ENCODE measurements at regions of chr12 and their contacts with region 1.

Region 1: DNA sequence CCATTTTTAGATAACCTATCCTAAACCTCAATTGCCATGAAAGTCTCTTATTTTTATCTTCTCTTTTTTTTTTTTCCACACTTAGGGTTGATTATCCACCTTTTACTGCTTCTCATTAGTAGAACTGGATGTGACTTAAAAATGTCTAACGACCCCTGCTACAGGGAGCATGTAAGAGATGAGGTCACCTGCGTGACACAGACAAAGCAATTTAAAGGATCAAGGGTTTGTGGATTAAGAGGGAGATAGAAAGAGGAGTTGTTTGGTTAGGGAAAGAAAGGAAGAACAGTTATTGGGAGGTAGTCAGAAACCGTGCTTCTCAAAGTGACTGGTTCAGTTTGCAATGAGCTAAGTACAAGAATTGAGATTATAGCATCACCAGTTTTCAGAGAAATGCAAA is 239.1 kb downstream of the ALX1 start:
- DNase-seq: no peak
- H3K4me3 ChIP-seq: no peak overlapping the region
- CTCF ChIP-seq: no peak
- POLR2A ChIP-seq: no peak

Region 2: GRCh38 chr12:85445060-85445938 is 73.9 kb before region 1 on chr12:
- intact Hi-C with region 1: loop called (anchors 2 kb)
- DNase-seq: no peak
- H3K4me3 ChIP-seq: no peak overlapping the region
- CTCF ChIP-seq: no peak
- POLR2A ChIP-seq: no peak

Measured in lower leg skin (tissue), 4 donors.